Ascending aorta (tissue), 2 donors: ENCODE measurements at regions of chr5 and their contacts with region 1.

Region 1: DNA sequence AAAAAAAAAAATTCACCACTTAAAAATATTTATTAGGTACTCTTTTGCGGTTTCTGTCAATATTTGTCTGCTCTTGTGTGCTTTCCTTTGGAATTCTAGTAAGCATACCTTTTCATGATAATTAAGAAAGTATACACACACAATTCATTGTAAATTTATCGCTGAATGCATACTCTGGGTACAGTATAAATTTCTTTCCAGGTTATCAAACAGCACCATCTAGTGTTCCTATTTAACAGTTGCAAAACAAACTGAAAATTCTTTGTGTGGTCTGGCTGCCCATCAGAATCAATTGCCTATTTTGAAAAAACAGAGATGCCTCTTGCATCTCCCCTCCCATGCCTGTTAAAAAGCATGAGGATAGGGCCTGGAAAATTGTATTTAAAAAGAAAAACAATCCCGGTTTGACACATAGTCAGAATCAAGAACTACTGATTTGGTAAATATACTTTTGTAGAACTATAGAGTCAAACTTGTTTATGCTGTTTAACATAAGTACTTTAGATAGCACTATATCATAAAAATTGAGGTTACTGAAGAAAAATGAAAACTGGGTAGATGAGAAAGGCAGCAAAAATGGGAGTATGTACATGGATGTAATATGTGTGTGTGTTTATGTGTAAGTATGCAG is 16.2 kb downstream of the PGGT1B start:
- DNase-seq: no peak
- H3K4me3 ChIP-seq: no peak overlapping the region
- H3K27ac ChIP-seq: no peak overlapping the region
- H3K4me1 ChIP-seq: peaks cover 0 to 6% of the 10 kb centered on the region in 2 donors
- H3K27me3 ChIP-seq: no peaks in the 10 kb centered on the region
- CTCF ChIP-seq: peak; percentile 36 to 80 (median 67)

Region 2: DNA sequence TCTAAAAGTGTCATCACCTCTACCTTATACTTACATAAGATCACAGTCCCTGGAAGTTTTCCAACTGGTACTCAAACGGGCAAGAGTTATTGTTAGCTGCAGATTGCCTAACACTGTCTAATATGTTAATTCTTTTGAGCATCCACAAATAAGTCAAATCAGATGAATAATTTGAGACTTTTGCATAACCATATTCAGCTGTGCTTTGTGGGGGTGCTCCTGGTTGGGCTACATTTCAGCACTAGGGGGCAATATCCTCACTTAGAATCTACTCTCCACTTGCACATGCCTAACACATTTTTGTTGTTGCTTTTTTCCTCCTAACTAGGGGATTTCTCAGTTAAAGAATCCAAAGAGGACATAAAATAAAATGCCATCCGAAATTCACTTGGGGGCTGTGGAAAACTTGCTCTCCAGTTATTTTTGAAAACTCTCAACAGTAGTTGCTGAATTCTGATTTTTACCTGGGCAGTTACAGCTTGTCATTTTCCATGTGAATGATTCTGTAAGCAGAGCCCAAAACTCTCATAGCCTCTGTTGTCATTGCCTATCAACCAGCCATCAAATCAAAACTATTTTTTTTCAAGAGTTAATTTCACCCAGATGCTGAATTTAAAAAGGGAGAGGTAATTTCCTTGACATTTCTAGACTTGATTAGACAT is 148.3 kb before region 1 on chr5:
- intact Hi-C with region 1: loop called (anchors 1 kb)
- DNase-seq: no peak
- H3K4me3 ChIP-seq: no peak overlapping the region
- H3K27ac ChIP-seq: no peak overlapping the region
- H3K4me1 ChIP-seq: no peaks in the 10 kb centered on the region
- H3K27me3 ChIP-seq: no peaks in the 10 kb centered on the region
- CTCF ChIP-seq: peak; percentile 45 to 69 (median 51)